ENCODE measurements at regions of chr1 and their contacts with region 1.

Region 1: GRCh38 chr1:193190096-193190744 is 3.8 kb upstream of the B3GALT2 start:
- DNase-seq: no peak
- ATAC-seq: peak in 1 of 4 donors; percentile 48
- H3K4me3 ChIP-seq: no peak overlapping the region
- H3K27ac ChIP-seq: peak overlapping the region in 8 of 12 donors; percentile 20 to 78 (median 74)
- H3K4me1 ChIP-seq: peaks cover 0 to 50% (median 28%) of the 10 kb centered on the region in 12 donors
- H3K27me3 ChIP-seq: no peaks in the 10 kb centered on the region
- CTCF ChIP-seq: peak in 10 of 12 donors; percentile 19 to 56 (median 36)
- POLR2A ChIP-seq: no peak

Region 2: DNA sequence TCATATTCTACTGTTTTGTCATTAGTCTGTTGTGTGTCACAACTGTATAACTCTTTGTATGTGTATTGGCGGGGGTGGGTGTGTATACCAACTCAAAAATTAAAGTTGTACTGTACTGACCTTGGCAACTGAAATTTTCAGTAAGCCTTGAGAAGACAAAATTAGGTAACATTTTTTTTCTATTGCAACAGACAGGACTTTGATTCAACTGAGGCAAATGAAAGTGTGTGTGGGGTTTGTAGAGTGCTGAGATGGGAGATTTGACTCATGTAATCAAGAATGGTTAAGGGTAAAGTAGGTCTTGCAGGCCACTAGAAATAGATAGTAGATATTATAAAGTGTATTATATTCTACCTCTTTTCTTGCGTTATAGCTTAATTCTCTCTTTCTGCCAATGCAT is 10.8 kb after region 1 on chr1:
- intact Hi-C with region 1: no loop called
- DNase-seq: no peak
- ATAC-seq: no peak
- H3K4me3 ChIP-seq: no peak overlapping the region
- H3K27ac ChIP-seq: no peak overlapping the region
- H3K4me1 ChIP-seq: peaks cover 0 to 22% (median 0%) of the 10 kb centered on the region in 12 donors
- H3K27me3 ChIP-seq: no peaks in the 10 kb centered on the region
- CTCF ChIP-seq: no peak
- POLR2A ChIP-seq: no peak

Region 3: GRCh38 chr1:193338194-193338593 is 148.0 kb after region 1 on chr1:
- intact Hi-C with region 1: loop called in 2 of 10 experiments (anchors 10 kb)
- DNase-seq: no peak
- ATAC-seq: peak in 1 of 4 donors; percentile 49
- H3K4me3 ChIP-seq: no peak overlapping the region
- H3K27ac ChIP-seq: no peak overlapping the region
- H3K4me1 ChIP-seq: peaks cover 0 to 4% (median 0%) of the 10 kb centered on the region in 12 donors
- H3K27me3 ChIP-seq: no peaks in the 10 kb centered on the region
- CTCF ChIP-seq: peak in 1 of 12 donors; percentile 9
- POLR2A ChIP-seq: no peak

Region 4: GRCh38 chr1:193537266-193538002 is 347.2 kb after region 1 on chr1:
- intact Hi-C with region 1: no loop called
- DNase-seq: no peak
- ATAC-seq: no peak
- H3K4me3 ChIP-seq: no peak overlapping the region
- H3K27ac ChIP-seq: peak overlapping the region in 1 of 12 donors; percentile 32
- H3K4me1 ChIP-seq: peaks cover 0 to 5% (median 0%) of the 10 kb centered on the region in 12 donors
- H3K27me3 ChIP-seq: no peaks in the 10 kb centered on the region
- CTCF ChIP-seq: no peak
- POLR2A ChIP-seq: no peak

Region 5: GRCh38 chr1:194295685-194296084 is 1105.5 kb after region 1 on chr1:
- intact Hi-C with region 1: loop called in 7 of 10 experiments (anchors 5 to 10 kb)
- DNase-seq: no peak
- ATAC-seq: peak; percentile 71 to 86 (median 80)
- H3K4me3 ChIP-seq: no peak overlapping the region
- H3K27ac ChIP-seq: no peak overlapping the region
- H3K4me1 ChIP-seq: no peaks in the 10 kb centered on the region
- H3K27me3 ChIP-seq: no peaks in the 10 kb centered on the region
- CTCF ChIP-seq: peak; percentile 41 to 63 (median 53)
- POLR2A ChIP-seq: no peak